ENCODE measurements at regions of chr12 and their contacts with region 1.

Region 1: DNA sequence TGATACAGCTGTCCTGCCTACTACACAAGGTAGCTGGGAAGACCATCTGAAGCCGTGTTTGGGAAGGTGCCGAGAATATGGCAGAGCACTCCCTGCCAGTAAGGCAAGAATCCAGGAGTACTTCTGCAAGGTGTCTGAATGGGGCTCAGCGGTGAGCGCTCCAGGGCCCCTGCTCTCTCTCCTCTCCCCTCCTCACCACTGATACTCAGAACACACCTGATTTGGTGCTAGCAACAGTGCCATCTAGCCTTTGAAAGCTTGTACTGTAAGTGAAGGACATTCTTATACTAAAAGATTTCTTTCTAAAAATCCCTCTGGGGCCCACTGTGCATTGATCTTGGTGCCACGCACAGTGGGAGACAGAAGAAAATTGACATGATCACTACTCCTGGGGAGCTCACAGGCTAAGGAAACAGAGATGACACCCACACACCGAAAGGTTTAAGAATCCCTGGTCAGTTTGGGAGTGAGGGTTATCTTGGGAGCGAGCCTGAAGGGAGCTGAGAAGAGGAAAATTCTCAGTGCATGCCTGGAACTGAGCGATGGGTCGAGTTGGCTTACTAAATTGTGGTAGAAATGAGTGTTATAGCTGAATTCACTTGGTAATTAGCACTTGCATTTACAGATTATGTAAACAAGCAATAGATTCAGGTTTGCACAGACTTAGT is 216.9 kb downstream of the NTF3 start:
- DNase-seq: no peak
- H3K4me3 ChIP-seq: no peak overlapping the region
- H3K27ac ChIP-seq: no peak overlapping the region
- H3K4me1 ChIP-seq: peaks cover 0 to 2% of the 10 kb centered on the region in 2 donors
- H3K27me3 ChIP-seq: no peaks in the 10 kb centered on the region
- CTCF ChIP-seq: peak in 2 of 3 experiments; percentile 32 to 55

Region 2: GRCh38 chr12:5511644-5512600 is 136.9 kb before region 1 on chr12:
- intact Hi-C with region 1: loop called (anchors 10 kb)
- DNase-seq: peak in 1 of 2 donors; percentile 72
- H3K4me3 ChIP-seq: peak overlapping the region in 1 of 2 donors; percentile 28
- H3K27ac ChIP-seq: no peak overlapping the region
- H3K4me1 ChIP-seq: no peaks in the 10 kb centered on the region
- H3K27me3 ChIP-seq: no peaks in the 10 kb centered on the region
- CTCF ChIP-seq: peak; percentile 50 to 88 (median 71)

Region 3: GRCh38 chr12:5665615-5666014 is 16.8 kb after region 1 on chr12:
- intact Hi-C with region 1: no loop called
- DNase-seq: no peak
- H3K4me3 ChIP-seq: no peak overlapping the region
- H3K27ac ChIP-seq: no peak overlapping the region
- H3K4me1 ChIP-seq: no peaks in the 10 kb centered on the region
- H3K27me3 ChIP-seq: no peaks in the 10 kb centered on the region
- CTCF ChIP-seq: no peak

Measured in ascending aorta (tissue), 2 donors.